Left ventricle myocardium inferior (tissue), 1 donor: ENCODE measurements at regions of chr12 and their contacts with region 1.

Region 1: DNA sequence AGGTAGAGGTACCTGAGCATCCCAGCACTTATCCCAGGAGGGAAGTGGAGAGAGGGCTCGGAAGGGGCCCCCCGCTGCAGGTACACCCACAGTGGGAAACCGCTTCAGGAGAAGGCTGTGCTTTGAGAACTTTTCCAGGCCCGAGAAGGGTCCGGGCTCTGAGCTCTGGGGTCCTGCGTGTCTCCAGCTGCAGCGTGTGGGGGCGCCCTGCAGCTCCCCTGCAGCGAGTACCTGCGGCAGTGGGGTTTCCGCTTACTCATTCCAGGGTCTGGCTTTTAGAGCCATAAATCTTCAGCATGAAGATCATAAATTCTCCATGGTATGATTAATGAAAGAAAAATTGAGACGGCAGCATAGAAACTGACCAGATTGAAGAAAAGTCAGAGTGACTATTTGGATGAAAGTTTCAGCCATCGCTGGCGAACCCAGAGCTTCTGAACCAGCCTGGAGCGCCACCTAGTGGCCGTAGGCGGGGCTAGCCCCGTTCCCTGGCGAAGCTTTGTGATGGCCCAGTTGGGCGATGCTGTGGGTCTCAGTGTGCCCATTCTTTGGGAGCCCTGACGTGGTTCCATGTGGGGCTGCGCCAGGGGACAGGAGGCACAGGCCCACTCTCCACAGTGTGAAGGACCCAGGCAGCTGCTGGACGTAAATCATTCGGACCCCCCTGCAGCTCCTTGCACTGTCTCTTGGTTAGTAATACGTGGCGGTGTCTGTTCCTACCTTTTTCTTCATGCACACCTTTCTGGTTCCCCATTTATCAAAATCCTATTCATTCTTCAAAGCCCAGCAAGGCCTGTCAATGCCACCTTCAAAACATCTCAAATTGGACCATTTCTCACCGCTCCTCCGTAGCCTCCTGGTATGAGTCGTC is 198.2 kb downstream of the TSPAN9 start:
- DNase-seq: peak; percentile 80
- H3K4me3 ChIP-seq: no peak overlapping the region
- H3K27ac ChIP-seq: peak overlapping the region; percentile 71
- H3K4me1 ChIP-seq: peaks cover 92% of the 10 kb centered on the region
- H3K27me3 ChIP-seq: no peaks in the 10 kb centered on the region
- CTCF ChIP-seq: peak; percentile 98

Region 2: GRCh38 chr12:3076730-3077571 is 198.5 kb before region 1 on chr12 and contains the start of gene TSPAN9:
- intact Hi-C with region 1: loop called (anchors 5 kb)
- DNase-seq: peak; percentile 82
- H3K4me3 ChIP-seq: peak within 1 kb of the TSS; percentile 98
- H3K27ac ChIP-seq: peak within 1 kb of the TSS; percentile 95
- H3K4me1 ChIP-seq: peaks cover 77% of the 10 kb centered on the region
- H3K27me3 ChIP-seq: no peaks in the 10 kb centered on the region
- CTCF ChIP-seq: no peak
- total RNA-seq, gene TSPAN9: 305 TPM

Region 3: DNA sequence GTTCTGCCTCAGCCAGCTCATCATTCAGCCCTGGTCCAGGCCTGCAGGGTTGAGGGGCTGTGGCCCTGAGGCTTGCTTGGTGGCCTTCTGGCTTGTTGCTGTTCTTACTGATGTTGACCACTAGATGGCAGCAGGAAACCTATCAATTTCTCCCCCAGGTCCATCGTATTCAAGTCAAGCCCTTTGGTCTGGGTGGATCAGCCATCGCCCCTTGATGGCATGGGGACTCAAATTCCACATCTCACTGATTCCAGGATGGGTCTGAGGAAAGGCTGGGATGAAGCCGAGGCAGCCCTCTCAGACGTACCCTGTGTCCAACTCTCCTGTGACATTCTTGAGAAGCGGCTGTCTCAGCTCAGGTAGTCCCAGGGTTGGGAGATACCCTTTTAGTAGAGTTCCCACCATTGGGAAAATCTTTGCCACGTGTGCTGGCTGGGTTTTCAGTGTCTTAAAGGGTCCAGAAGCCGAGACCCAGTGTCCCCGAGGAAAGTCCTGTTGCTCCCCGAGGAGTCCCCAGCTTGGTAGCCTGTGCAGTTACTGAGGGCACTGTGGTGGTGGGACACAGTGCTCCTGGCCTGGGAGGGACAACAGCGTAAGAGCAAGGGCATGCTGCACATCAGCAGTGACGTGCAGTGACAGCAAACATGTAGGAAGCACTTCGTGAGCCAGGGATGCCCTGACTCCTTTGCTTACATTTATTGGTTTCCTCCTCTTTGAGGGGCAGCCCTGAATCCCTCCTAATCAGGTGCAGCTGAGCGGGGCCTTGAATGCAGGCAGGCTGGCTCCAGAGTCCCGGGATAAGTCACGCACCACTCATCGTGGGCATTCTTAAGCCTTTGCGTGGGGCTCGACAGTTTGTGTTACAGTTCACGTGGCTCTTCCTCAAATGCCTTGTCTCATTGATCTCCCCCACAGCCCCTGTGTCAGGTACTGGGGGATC is 139.6 kb before region 1 on chr12:
- intact Hi-C with region 1: loop called (anchors 5 kb)
- DNase-seq: no peak
- H3K4me3 ChIP-seq: no peak overlapping the region
- H3K27ac ChIP-seq: no peak overlapping the region
- H3K4me1 ChIP-seq: peaks cover 100% of the 10 kb centered on the region
- H3K27me3 ChIP-seq: no peaks in the 10 kb centered on the region
- CTCF ChIP-seq: peak; percentile 86

Region 4: GRCh38 chr12:3202734-3203446 is 72.5 kb before region 1 on chr12:
- intact Hi-C with region 1: loop called (anchors 10 kb)
- DNase-seq: no peak
- H3K4me3 ChIP-seq: peak overlapping the region; percentile 76
- H3K27ac ChIP-seq: peak overlapping the region; percentile 87
- H3K4me1 ChIP-seq: peaks cover 91% of the 10 kb centered on the region
- H3K27me3 ChIP-seq: no peaks in the 10 kb centered on the region
- CTCF ChIP-seq: peak; percentile 92

Region 5: DNA sequence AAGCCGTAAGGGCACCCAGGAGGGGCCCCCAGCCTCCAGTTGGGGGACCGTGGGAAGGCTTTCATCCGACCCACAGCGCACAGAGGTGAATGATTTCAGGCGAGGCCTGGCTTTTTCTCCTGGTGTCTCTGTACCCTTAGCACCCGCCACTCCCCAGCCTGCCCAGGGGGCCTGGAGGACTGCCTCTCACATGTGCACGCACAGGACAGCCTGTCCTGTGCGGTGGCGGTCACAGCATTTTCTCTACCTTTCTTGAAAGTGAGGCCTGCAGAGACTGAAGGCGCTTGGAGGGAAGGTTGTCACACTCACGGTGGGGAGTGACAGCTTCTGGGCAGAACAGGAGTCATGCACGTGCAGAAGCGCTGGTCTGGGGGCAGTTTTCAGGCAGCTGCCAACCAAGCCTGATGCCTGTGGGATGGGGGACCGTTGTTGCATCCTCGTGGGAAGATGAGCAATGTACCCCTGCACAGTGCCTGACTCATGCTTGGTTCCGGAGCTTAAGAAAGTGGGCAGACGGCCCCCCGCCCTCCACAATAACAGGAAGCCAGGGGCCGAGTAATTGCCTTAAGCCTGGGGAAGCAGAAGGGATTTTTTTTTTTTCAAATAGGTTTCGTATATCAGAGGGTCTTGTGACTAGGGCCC is 50.1 kb before region 1 on chr12:
- intact Hi-C with region 1: no loop called
- DNase-seq: no peak
- H3K4me3 ChIP-seq: no peak overlapping the region
- H3K27ac ChIP-seq: peak overlapping the region; percentile 13
- H3K4me1 ChIP-seq: peaks cover 87% of the 10 kb centered on the region
- H3K27me3 ChIP-seq: no peaks in the 10 kb centered on the region
- CTCF ChIP-seq: no peak

Region 6: GRCh38 chr12:3416154-3416553 is 140.7 kb after region 1 on chr12:
- intact Hi-C with region 1: no loop called
- DNase-seq: no peak
- H3K4me3 ChIP-seq: no peak overlapping the region
- H3K27ac ChIP-seq: no peak overlapping the region
- H3K4me1 ChIP-seq: peaks cover 6% of the 10 kb centered on the region
- H3K27me3 ChIP-seq: peaks cover 55% of the 10 kb centered on the region
- CTCF ChIP-seq: no peak